HCT116 (cell line): ENCODE measurements at regions of chr1 and their contacts with region 1.

Region 1: GRCh38 chr1:182962554-182963115 is 9.7 kb upstream of the SHCBP1L start:
- DNase-seq: peak; percentile 79
- ATAC-seq: peak; percentile 99
- H3K4me3 ChIP-seq: peak overlapping the region; percentile 29 to 37
- H3K27ac ChIP-seq: peak overlapping the region; percentile 3; the same call in 1 of the 2 replicates
- H3K4me1 ChIP-seq: peaks cover 3 to 8% of the 10 kb centered on the region in 2 experiments; a peak in 3 of 4 replicates
- H3K27me3 ChIP-seq: no peaks in the 10 kb centered on the region
- CTCF ChIP-seq: peak; percentile 89 to 97 (median 96)
- POLR2A ChIP-seq: peak; percentile 44
- RAD21 ChIP-seq: peak; percentile 99

Region 2: GRCh38 chr1:183080406-183080805 is 117.8 kb after region 1 on chr1:
- CTCF ChIA-PET with region 1: no interaction called
- POLR2A ChIA-PET with region 1: no interaction called
- RAD21 ChIA-PET with region 1: no interaction called
- intact Hi-C with region 1: no loop called
- DNase-seq: no peak
- ATAC-seq: peak; percentile 57
- H3K4me3 ChIP-seq: no peak overlapping the region
- H3K27ac ChIP-seq: no peak overlapping the region
- H3K4me1 ChIP-seq: peaks cover 14 to 26% of the 10 kb centered on the region in 2 experiments
- H3K27me3 ChIP-seq: no peaks in the 10 kb centered on the region
- CTCF ChIP-seq: no peak
- POLR2A ChIP-seq: no peak
- RAD21 ChIP-seq: no peak

Region 3: DNA sequence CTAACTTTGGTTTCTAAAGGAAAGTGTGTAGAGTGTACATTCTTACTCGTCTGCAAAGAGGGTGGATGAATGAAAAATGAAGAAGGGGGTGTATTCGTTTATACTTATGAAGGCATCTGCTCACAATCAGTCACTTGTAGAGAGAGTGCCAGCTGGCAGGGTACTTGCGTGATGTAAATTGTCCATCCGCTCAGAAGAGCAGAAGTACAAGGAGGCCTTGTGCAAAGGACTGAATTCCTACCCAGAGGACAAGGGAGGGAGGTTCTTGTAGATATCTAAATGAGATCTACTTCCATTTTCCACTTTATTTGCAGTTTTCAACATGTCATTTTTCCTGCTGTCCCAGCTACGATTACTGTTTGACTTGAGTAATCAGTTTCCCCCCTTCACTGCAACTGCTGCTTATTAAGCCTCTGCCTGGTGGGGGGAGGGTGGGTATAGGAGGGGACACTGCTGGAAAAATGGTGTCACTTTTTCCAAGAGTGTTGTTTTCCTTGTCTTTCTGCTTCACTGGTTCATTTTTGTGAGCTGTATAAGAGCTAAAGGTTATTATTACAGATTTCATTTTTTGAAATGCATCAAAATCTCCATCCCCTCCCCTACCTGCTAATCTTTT is 127.9 kb after region 1 on chr1:
- CTCF ChIA-PET with region 1: no interaction called
- POLR2A ChIA-PET with region 1: no interaction called
- RAD21 ChIA-PET with region 1: no interaction called
- intact Hi-C with region 1: loop called (anchors 10 kb)
- DNase-seq: no peak
- ATAC-seq: no peak
- H3K4me3 ChIP-seq: no peak overlapping the region
- H3K27ac ChIP-seq: no peak overlapping the region
- H3K4me1 ChIP-seq: peaks cover 31 to 58% of the 10 kb centered on the region in 2 experiments
- H3K27me3 ChIP-seq: no peaks in the 10 kb centered on the region
- CTCF ChIP-seq: no peak
- POLR2A ChIP-seq: no peak
- RAD21 ChIP-seq: no peak

Region 4: DNA sequence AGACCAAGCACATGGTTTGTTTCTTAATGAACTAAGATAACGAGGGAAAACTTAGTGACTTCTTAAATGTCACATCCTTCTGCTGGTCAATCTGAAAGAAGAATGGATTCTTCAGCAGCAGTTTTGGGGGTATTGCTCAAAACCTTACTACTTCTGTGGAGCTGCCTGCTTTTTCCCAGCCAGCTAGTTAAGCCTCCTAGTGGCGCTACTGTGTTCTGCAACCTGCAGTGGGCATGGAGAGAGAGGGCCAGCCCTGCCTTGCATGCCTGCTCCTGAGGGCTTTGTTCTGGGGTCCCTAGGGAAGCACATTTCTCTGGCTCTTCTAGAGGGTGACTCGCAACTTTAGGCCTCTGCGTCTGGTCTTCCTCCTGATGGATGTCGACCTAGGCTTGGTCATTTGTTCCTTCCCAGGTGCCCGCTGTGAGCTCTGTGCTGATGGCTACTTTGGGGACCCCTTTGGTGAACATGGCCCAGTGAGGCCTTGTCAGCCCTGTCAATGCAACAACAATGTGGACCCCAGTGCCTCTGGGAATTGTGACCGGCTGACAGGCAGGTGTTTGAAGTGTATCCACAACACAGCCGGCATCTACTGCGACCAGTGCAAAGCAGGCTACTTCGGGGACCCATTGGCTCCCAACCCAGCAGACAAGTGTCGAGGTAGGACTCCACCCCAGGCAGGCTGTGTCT is 265.5 kb after region 1 on chr1:
- CTCF ChIA-PET with region 1: interaction called, 27 read pairs
- POLR2A ChIA-PET with region 1: no interaction called
- RAD21 ChIA-PET with region 1: interaction called, 7 read pairs
- intact Hi-C with region 1: no loop called
- DNase-seq: peak; percentile 26
- ATAC-seq: peak; percentile 90
- H3K4me3 ChIP-seq: no peak overlapping the region
- H3K27ac ChIP-seq: no peak overlapping the region
- H3K4me1 ChIP-seq: peaks cover 8 to 16% of the 10 kb centered on the region in 2 experiments; a peak in 2 of 4 replicates
- H3K27me3 ChIP-seq: no peaks in the 10 kb centered on the region
- CTCF ChIP-seq: peak; percentile 44 to 93 (median 80); a peak in 5 of 6 replicates
- POLR2A ChIP-seq: no peak
- RAD21 ChIP-seq: peak; percentile 75

Region 5: GRCh38 chr1:183281553-183282091 is 319.0 kb after region 1 on chr1:
- CTCF ChIA-PET with region 1: interaction called, 5 read pairs
- POLR2A ChIA-PET with region 1: no interaction called
- RAD21 ChIA-PET with region 1: interaction called in 1 of 2 experiments, 5 read pairs
- intact Hi-C with region 1: loop called (anchors 1 kb)
- DNase-seq: peak; percentile 65
- ATAC-seq: peak; percentile 96
- H3K4me3 ChIP-seq: no peak overlapping the region
- H3K27ac ChIP-seq: no peak overlapping the region
- H3K4me1 ChIP-seq: no peaks in the 10 kb centered on the region
- H3K27me3 ChIP-seq: no peaks in the 10 kb centered on the region
- CTCF ChIP-seq: peak; percentile 87 to 97 (median 90)
- POLR2A ChIP-seq: no peak
- RAD21 ChIP-seq: peak; percentile 88

Region 6: GRCh38 chr1:183622884-183623785 is 660.5 kb after region 1 on chr1:
- CTCF ChIA-PET with region 1: no interaction called
- POLR2A ChIA-PET with region 1: no interaction called
- RAD21 ChIA-PET with region 1: no interaction called
- intact Hi-C with region 1: loop called (anchors 5 kb)
- DNase-seq: peak; percentile 51
- ATAC-seq: peak; percentile 99
- H3K4me3 ChIP-seq: no peak overlapping the region
- H3K27ac ChIP-seq: no peak overlapping the region
- H3K4me1 ChIP-seq: peaks cover 0 to 5% of the 10 kb centered on the region in 2 experiments; a peak in 1 of 4 replicates
- H3K27me3 ChIP-seq: no peaks in the 10 kb centered on the region
- CTCF ChIP-seq: peak; percentile 60 to 76 (median 71); a peak in 5 of 6 replicates
- POLR2A ChIP-seq: no peak
- RAD21 ChIP-seq: peak; percentile 90